ENCODE measurements at regions of chr6 and their contacts with region 1.

Region 1: GRCh38 chr6:36340618-36341454 is 4.1 kb upstream of the BNIP5 start:
- DNase-seq: peak; percentile 25 to 77 (median 63)
- ATAC-seq: peak; percentile 74 to 88 (median 82)
- H3K4me3 ChIP-seq: no peak overlapping the region
- H3K4me3 Mint-ChIP-seq: peak overlapping the region; percentile 22 to 72 (median 70)
- H3K27ac ChIP-seq: no peak overlapping the region
- H3K27ac Mint-ChIP-seq: peak overlapping the region in 1 of 2 donors; percentile 59
- H3K4me1 ChIP-seq: peaks cover 3 to 23% of the 10 kb centered on the region in 2 experiments
- H3K4me1 Mint-ChIP-seq: peaks cover 16 to 25% (median 18%) of the 10 kb centered on the region in 3 donors
- H3K27me3 ChIP-seq: peaks cover 4 to 26% of the 10 kb centered on the region in 2 experiments
- H3K27me3 Mint-ChIP-seq: peaks cover 6 to 17% of the 10 kb centered on the region in 2 donors

Region 2: DNA sequence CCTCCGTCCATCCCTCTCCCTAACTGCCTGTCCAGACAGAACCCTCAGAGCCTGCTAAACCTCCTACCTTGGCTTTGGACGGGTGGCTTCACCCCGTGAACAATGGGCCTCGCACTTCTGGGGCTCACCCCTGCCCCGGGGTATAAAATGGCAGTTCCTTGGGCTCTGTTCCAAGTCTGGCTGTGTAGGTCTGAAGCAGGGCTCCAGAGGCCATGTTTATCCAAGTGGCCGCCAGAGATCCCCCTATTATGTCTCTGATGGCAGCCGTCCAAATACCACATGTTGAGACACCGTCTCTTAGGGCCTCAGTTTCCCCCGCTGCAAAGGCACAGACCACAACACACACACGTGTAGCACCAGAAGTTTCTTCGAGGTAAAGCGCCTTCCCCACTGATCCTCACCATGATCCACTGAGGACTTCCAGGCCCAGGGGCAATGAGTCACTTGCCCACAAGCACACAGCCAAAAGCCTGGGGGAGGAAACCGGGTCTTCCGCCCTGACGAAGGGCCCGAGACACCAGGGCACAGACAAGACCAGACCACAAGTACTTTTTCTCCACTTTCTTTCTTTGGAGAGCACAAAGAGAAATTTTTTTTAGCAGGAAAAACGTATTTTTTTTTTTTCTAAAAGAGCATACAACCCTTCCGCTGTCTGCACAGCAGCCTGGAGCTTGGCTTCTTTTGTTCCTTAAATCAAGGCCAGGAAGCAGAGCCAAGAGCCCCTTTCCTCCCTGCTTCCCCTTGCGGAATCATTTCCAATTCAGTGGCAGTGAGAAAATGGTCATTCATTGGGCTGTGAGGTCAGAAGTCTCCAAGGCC is 486.6 kb after region 1 on chr6:
- CTCF ChIA-PET with region 1: interaction called in 1 of 2 experiments, 11 read pairs
- POLR2A ChIA-PET with region 1: no interaction called
- DNase-seq: peak in 2 of 35 experiments; percentile 12 to 25
- ATAC-seq: peak; percentile 34 to 76 (median 49)
- H3K4me3 ChIP-seq: no peak overlapping the region
- H3K4me3 Mint-ChIP-seq: no peak overlapping the region
- H3K27ac ChIP-seq: no peak overlapping the region
- H3K27ac Mint-ChIP-seq: no peak overlapping the region
- H3K4me1 ChIP-seq: no peaks in the 10 kb centered on the region
- H3K4me1 Mint-ChIP-seq: peaks cover 3 to 8% (median 7%) of the 10 kb centered on the region in 3 donors
- H3K27me3 ChIP-seq: peaks cover 0 to 21% of the 10 kb centered on the region in 2 experiments
- H3K27me3 Mint-ChIP-seq: peaks cover 5 to 11% of the 10 kb centered on the region in 2 donors

Measured in T-cell (primary cell).